A549 (cell line): ENCODE measurements at regions of chr4 and their contacts with region 1.

Region 1: DNA sequence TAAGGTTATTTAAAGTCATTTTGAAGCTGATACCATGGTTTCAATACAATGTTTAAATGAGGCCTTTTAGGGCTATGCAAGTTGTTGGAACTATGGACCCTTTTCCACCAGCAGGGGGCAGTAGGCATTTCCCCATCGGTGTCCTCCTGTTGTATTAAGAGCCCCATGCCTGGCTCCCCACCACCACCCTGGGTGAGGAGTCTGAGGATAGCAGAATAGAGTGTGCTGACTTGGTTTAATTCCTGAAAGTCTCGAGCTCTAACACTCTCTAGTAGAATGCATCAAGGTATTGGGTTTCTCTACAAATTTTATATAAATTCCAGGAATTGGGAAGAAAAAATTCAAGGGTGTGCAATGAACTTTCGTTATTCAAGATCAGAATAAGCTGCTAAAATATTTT is 234.8 kb upstream of the JADE1 start:
- DNase-seq: peak; percentile 52 to 93
- ATAC-seq: peak; percentile 70 to 79
- H3K4me3 ChIP-seq: no peak overlapping the region
- H3K27ac ChIP-seq: peak overlapping the region; percentile 97 to 98
- H3K4me1 ChIP-seq: peaks cover 65% of the 10 kb centered on the region
- CTCF ChIP-seq: peak; percentile 78
- EP300 ChIP-seq: no peak
- POLR2A ChIP-seq: no peak
- RAD21 ChIP-seq: peak; percentile 88 to 90

Region 2: GRCh38 chr4:128454281-128455075 is 120.2 kb before region 1 on chr4:
- CTCF ChIA-PET with region 1: interaction called, 25 read pairs
- POLR2A ChIA-PET with region 1: no interaction called
- DNase-seq: peak; percentile 89 to 92
- ATAC-seq: peak; percentile 93 to 96
- H3K4me3 ChIP-seq: no peak overlapping the region
- H3K27ac ChIP-seq: peak overlapping the region; percentile 96
- H3K4me1 ChIP-seq: peaks cover 83% of the 10 kb centered on the region
- CTCF ChIP-seq: peak; percentile 69
- EP300 ChIP-seq: peak; percentile 27 to 51; a peak in 1 of 5 replicates
- POLR2A ChIP-seq: no peak
- RAD21 ChIP-seq: peak; percentile 86 to 91

Region 3: GRCh38 chr4:128468123-128468989 is 106.3 kb before region 1 on chr4:
- CTCF ChIA-PET with region 1: no interaction called
- POLR2A ChIA-PET with region 1: no interaction called
- DNase-seq: peak in 1 of 2 experiments; percentile 32
- ATAC-seq: peak in 1 of 2 experiments; percentile 34; a peak in 1 of 6 replicates
- H3K4me3 ChIP-seq: no peak overlapping the region
- H3K27ac ChIP-seq: peak overlapping the region; percentile 16 to 51; a peak in 3 of 6 replicates
- H3K4me1 ChIP-seq: peaks cover 42% of the 10 kb centered on the region
- CTCF ChIP-seq: no peak
- EP300 ChIP-seq: no peak
- POLR2A ChIP-seq: no peak
- RAD21 ChIP-seq: no peak

Region 4: GRCh38 chr4:128538111-128538882 is 36.4 kb before region 1 on chr4:
- CTCF ChIA-PET with region 1: no interaction called
- POLR2A ChIA-PET with region 1: no interaction called
- DNase-seq: no peak
- ATAC-seq: no peak
- H3K4me3 ChIP-seq: no peak overlapping the region
- H3K27ac ChIP-seq: peak overlapping the region in 1 of 2 experiments; percentile 48; a peak in 3 of 6 replicates
- H3K4me1 ChIP-seq: no peaks in the 10 kb centered on the region
- CTCF ChIP-seq: no peak
- EP300 ChIP-seq: no peak
- POLR2A ChIP-seq: no peak
- RAD21 ChIP-seq: no peak

Region 5: DNA sequence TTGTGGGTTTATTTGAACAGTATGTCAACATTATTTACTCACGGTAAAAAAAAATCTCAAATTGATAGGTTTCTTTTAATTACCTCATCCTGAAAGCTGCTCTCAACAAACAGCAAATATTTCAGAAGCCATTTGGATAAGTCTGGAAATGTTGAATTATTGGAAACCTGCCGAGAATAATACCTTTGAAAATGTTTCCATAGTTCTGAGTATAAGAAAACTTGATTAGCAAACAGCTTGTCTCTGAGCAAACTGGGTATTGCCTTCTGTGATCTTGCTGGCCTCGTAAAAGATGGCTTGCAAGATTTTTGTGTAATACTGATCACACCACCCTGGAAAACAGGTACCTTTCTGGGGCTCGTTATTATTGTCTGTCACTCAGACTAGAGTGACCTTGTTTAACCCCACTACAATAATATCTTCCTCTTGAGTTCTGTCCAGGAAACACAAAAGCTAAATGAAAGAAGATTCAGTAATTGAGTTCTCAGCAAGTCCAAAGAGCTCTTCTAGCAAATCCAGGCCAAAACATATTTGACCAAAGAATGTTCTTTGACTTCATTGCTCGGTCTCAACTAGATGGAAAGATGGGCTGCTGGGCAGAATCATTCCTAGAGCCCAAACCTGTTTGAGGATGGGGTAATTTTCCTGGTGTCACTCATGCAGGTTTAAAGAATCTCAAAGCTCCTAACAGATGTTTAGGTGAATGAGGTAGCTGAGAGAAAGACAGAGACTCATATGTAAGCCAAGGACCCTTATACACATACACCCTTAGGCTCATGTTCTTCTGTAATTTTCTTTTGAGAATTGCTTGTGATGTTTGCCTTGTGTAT is 20.8 kb before region 1 on chr4:
- CTCF ChIA-PET with region 1: interaction called, 30 read pairs
- POLR2A ChIA-PET with region 1: interaction called, 20 read pairs
- DNase-seq: peak in 1 of 2 experiments; percentile 74
- ATAC-seq: peak; percentile 34 to 44; a peak in 5 of 6 replicates
- H3K4me3 ChIP-seq: peak overlapping the region; percentile 28; the same call in 2 of the 3 replicates
- H3K27ac ChIP-seq: peak overlapping the region; percentile 99 to 100
- H3K4me1 ChIP-seq: peaks cover 53% of the 10 kb centered on the region
- CTCF ChIP-seq: no peak
- EP300 ChIP-seq: peak in 1 of 2 experiments; percentile 79; a peak in 2 of 5 replicates
- POLR2A ChIP-seq: no peak
- RAD21 ChIP-seq: no peak; a peak in 2 of 5 replicates

Region 6: DNA sequence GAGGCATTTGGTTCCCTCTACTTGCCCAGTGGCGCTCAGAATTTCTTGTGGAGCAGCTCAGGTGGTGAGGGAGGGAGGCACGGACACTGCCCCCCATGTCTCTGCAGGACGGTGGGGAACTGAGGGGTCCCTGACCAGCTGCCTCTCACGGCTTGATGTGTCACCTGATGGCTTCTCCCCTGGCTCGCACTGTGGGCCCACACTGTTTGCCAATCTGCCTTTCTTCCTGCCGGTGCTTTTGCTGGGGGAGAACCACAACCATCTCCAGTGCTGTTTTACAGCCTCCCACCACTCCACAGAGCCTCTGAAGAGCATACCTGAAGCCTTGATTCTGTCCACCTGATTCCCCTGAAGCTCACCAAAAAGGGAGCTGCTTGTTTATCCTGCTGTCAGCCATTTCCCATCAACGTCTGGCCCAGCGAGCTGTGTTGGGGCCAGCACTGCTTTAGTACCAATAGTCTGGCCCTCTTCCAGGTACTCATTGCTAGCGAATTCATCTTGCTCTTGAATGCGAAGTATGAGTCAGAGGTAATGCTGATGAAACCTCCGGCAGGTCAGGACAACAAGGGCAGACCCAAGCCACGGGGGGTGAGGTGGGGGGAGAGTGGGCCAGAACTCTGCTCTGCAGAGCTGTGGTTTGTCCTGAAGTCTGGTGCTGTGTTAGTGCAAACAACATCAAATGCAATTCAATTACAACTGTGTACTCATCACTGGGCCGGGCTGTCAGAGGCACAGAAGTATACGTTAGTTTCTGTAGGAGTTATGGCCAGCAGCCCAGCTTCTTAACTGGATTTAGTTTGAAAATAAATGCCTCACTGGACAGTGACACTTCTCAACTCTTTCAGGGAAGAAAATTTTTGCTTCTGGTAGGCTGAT is 26.5 kb after region 1 on chr4:
- CTCF ChIA-PET with region 1: interaction called, 18 read pairs
- POLR2A ChIA-PET with region 1: no interaction called
- DNase-seq: peak; percentile 48 to 94
- ATAC-seq: peak; percentile 89 to 92
- H3K4me3 ChIP-seq: no peak overlapping the region
- H3K27ac ChIP-seq: peak overlapping the region; percentile 85 to 98
- H3K4me1 ChIP-seq: peaks cover 81% of the 10 kb centered on the region
- CTCF ChIP-seq: no peak
- EP300 ChIP-seq: peak; percentile 83 to 88; a peak in 4 of 5 replicates
- POLR2A ChIP-seq: no peak
- RAD21 ChIP-seq: peak in 1 of 2 experiments; percentile 59; a peak in 2 of 5 replicates

Region 7: GRCh38 chr4:128863312-128864075 is 288.8 kb after region 1 on chr4:
- CTCF ChIA-PET with region 1: interaction called, 13 read pairs
- POLR2A ChIA-PET with region 1: no interaction called
- DNase-seq: peak; percentile 52 to 81
- ATAC-seq: peak; percentile 82 to 88
- H3K4me3 ChIP-seq: no peak overlapping the region
- H3K27ac ChIP-seq: peak overlapping the region; percentile 43 to 80; a peak in 5 of 6 replicates
- H3K4me1 ChIP-seq: peaks cover 38% of the 10 kb centered on the region
- CTCF ChIP-seq: peak; percentile 75
- EP300 ChIP-seq: no peak
- POLR2A ChIP-seq: no peak
- RAD21 ChIP-seq: peak; percentile 64 to 67